ENCODE measurements at regions of chr1 and their contacts with region 1.

Region 1: DNA sequence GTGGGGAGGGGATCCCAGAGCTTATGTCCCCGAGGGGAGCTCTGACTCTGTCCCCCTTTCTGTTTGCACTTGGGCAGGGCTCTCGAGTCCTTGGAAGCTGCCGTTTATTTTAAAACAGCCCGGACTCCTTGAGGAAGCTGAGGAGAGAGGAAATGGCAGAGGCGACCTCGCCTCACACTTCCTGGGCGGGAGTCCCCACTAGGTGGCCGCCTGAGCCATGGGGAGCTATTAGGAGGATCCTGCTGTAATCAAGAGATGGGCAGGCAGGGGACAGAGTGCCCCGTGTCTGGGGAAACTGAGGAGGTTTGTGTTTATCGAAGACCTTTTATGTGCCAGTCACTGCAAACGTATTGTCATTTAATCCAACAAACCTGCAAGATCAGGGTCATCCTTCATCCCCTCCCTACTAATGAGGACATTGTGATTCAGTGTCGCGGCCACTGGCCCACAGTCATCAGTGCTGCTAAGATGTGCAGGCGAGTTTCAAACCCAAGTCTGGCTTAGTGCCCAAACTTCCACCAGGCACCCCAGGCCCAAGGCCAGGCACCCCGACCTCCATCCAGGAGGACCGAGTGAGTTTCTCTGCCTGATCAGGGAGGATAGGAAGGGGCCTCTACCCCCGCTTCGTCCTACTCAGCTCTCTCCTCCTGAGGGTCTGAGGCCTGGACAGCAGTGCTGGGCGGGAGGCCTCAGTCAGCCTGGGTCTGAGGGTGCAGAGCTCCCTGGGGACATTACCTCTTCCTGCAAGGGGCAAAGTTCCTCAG is 316.9 kb upstream of the VAMP3 start:
- DNase-seq: peak; percentile 77
- H3K4me3 ChIP-seq: no peak overlapping the region; a peak in 1 of 4 replicates
- H3K27ac ChIP-seq: peak overlapping the region in 1 of 2 experiments; percentile 81; a peak in 2 of 4 replicates
- H3K4me1 ChIP-seq: peaks cover 0 to 63% of the 10 kb centered on the region in 2 experiments; a peak in 2 of 4 replicates
- H3K27me3 ChIP-seq: no peaks in the 10 kb centered on the region
- CTCF ChIP-seq: peak; percentile 48
- EP300 ChIP-seq: no peak
- RAD21 ChIP-seq: peak; percentile 71

Region 2: GRCh38 chr1:7219031-7219430 is 235.2 kb before region 1 on chr1:
- CTCF ChIA-PET with region 1: no interaction called
- POLR2A ChIA-PET with region 1: no interaction called
- DNase-seq: no peak
- H3K4me3 ChIP-seq: no peak overlapping the region
- H3K27ac ChIP-seq: no peak overlapping the region
- H3K4me1 ChIP-seq: peaks cover 3 to 6% of the 10 kb centered on the region in 2 experiments; a peak in 2 of 4 replicates
- H3K27me3 ChIP-seq: no peaks in the 10 kb centered on the region
- CTCF ChIP-seq: no peak
- EP300 ChIP-seq: no peak
- RAD21 ChIP-seq: no peak

Region 3: GRCh38 chr1:7478809-7479499 is 24.7 kb after region 1 on chr1:
- CTCF ChIA-PET with region 1: interaction called, 11 read pairs
- POLR2A ChIA-PET with region 1: interaction called, 5 read pairs
- DNase-seq: no peak
- H3K4me3 ChIP-seq: no peak overlapping the region
- H3K27ac ChIP-seq: peak overlapping the region in 1 of 2 experiments; percentile 99; a peak in 2 of 4 replicates
- H3K4me1 ChIP-seq: peaks cover 0 to 71% of the 10 kb centered on the region in 2 experiments; a peak in 3 of 4 replicates
- H3K27me3 ChIP-seq: no peaks in the 10 kb centered on the region
- CTCF ChIP-seq: no peak
- EP300 ChIP-seq: no peak
- RAD21 ChIP-seq: no peak